Sigmoid colon (tissue), 7 donors: ENCODE measurements at regions of chr13 and their contacts with region 1.

Region 1: DNA sequence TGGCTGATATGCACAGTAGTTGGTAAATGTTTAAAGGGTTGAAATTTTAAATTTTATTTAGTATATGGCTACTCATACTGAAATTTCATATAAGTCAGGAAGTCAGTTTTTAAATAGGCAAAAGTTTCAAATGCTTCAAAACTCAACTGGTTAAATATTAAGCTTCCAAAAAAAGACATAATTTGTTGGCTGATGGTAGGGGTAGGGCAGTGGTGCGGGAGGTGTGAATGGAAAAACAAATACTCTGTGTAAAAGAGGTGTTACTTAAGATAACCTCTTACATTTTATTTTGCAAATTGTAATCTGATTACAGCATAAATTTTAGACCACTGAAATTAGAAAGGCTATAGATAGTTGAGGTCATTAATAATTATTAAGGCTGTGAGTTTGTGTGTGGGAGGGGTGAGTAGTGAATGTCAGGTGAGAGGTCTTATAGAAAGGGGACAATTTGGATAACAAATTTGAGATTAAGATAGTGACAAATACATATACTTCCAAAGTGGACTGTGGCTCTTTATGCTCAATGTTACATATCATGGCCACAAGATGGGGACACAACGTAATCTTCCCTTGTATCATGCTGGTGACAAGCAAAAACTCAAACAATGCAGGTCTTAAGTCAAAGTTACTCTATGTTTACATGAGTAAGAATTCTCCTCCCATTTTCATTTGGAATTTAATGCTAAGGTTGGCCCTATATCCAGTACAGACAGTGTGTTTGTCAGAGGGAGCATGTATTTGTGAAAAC is 36.6 kb upstream of the OXGR1 start:
- DNase-seq: no peak
- H3K4me3 ChIP-seq: no peak overlapping the region
- H3K27ac ChIP-seq: no peak overlapping the region
- H3K4me1 ChIP-seq: no peaks in the 10 kb centered on the region
- H3K27me3 ChIP-seq: no peaks in the 10 kb centered on the region
- CTCF ChIP-seq: peak in 1 of 4 experiments; percentile 11
- EP300 ChIP-seq: no peak
- POLR2A ChIP-seq: no peak

Region 2: GRCh38 chr13:97018029-97018831 is 12.6 kb before region 1 on chr13:
- intact Hi-C with region 1: loop called (anchors 1 kb)
- DNase-seq: no peak
- H3K4me3 ChIP-seq: peak overlapping the region in 1 of 4 donors; percentile 10
- H3K27ac ChIP-seq: peak overlapping the region in 1 of 4 donors; percentile 30
- H3K4me1 ChIP-seq: peaks cover 0 to 11% (median 6%) of the 10 kb centered on the region in 4 donors
- H3K27me3 ChIP-seq: no peaks in the 10 kb centered on the region
- CTCF ChIP-seq: peak; percentile 64 to 83 (median 66)
- EP300 ChIP-seq: no peak
- POLR2A ChIP-seq: no peak

Region 3: DNA sequence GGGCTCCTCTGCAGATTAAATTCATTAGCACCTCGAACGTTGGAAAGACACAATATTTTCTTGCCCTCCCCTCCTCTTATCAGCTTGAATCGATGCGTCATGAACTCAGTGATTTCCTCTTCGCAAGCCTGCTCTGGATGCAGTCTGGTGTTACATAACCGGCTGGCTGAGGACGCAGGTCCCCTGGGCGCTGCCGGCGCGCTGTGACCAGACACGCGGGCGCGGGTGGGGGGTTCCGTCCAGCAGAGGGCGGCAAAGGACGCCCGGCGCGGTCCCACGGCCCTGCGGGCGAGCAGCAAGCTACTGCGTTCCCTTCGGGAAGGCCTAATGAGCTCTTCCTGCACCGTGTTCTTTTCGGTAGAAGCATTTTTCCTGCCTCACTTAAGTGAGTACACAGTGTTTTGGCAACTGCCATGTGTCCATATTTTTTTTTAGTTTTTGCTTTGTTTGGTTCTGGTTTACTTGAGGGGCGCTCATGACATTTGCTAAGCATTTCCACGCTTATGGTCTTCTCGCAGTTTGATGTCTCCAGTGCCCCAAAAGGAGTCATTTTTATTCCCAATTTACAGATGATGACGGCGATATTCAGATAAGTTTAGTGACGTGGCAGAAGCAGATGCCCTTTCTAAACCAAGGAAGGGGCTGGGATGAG is 79.1 kb after region 1 on chr13:
- intact Hi-C with region 1: loop called (anchors 5 kb)
- DNase-seq: peak; percentile 96
- H3K4me3 ChIP-seq: peak overlapping the region in 2 of 4 donors; percentile 20 to 27
- H3K27ac ChIP-seq: peak overlapping the region; percentile 68 to 90 (median 83)
- H3K4me1 ChIP-seq: peaks cover 0 to 69% (median 65%) of the 10 kb centered on the region in 4 donors
- H3K27me3 ChIP-seq: no peaks in the 10 kb centered on the region
- CTCF ChIP-seq: peak; percentile 87 to 95 (median 90)
- EP300 ChIP-seq: peak in 1 of 4 donors; percentile 43
- POLR2A ChIP-seq: no peak

Region 4: DNA sequence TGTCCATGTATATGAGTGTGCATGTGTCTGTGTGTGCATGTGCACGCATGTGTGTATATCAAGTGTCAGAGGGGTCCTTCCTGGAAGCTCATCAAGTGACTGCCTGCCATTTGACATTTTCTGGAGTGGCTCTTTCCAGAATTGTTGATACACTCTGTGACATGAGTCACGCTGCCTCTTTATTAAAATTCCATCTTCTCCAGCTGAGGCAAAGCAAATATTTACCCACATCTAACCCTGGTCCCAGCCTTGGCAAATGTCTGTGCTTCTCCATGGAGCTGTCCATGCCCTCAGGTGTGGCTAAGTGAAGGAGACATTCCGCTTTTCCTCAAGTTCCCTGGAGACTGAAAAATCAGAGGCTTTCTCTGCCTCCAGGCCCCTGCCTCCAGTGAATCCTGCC is 103.1 kb after region 1 on chr13:
- intact Hi-C with region 1: no loop called
- DNase-seq: no peak
- H3K4me3 ChIP-seq: no peak overlapping the region
- H3K27ac ChIP-seq: no peak overlapping the region
- H3K4me1 ChIP-seq: peaks cover 0 to 7% (median 0%) of the 10 kb centered on the region in 4 donors
- H3K27me3 ChIP-seq: no peaks in the 10 kb centered on the region
- CTCF ChIP-seq: no peak
- EP300 ChIP-seq: no peak
- POLR2A ChIP-seq: no peak

Region 5: GRCh38 chr13:97221989-97222700 is 191.3 kb after region 1 on chr13 and contains the start of gene MBNL2:
- intact Hi-C with region 1: loop called (anchors 10 kb)
- DNase-seq: peak; percentile 97
- H3K4me3 ChIP-seq: peak within 1 kb of the TSS; percentile 59 to 62 (median 61)
- H3K27ac ChIP-seq: peak within 1 kb of the TSS; percentile 88 to 94 (median 92)
- H3K4me1 ChIP-seq: peaks cover 0 to 33% (median 30%) of the 10 kb centered on the region in 4 donors
- H3K27me3 ChIP-seq: no peaks in the 10 kb centered on the region
- CTCF ChIP-seq: no peak
- EP300 ChIP-seq: peak in 3 of 4 donors; percentile 74 to 92 (median 87)
- POLR2A ChIP-seq: peak; percentile 76 to 80
- total RNA-seq, gene MBNL2: 84.7 to 110 (median 95.1) TPM

Region 6: GRCh38 chr13:97359181-97360057 is 328.5 kb after region 1 on chr13:
- intact Hi-C with region 1: loop called (anchors 5 kb)
- DNase-seq: peak; percentile 84
- H3K4me3 ChIP-seq: no peak overlapping the region
- H3K27ac ChIP-seq: peak overlapping the region; percentile 20 to 73 (median 51)
- H3K4me1 ChIP-seq: peaks cover 0 to 50% (median 22%) of the 10 kb centered on the region in 4 donors
- H3K27me3 ChIP-seq: no peaks in the 10 kb centered on the region
- CTCF ChIP-seq: peak; percentile 78 to 93 (median 89)
- EP300 ChIP-seq: peak in 1 of 4 donors; percentile 22
- POLR2A ChIP-seq: no peak